ENCODE measurements at regions of chr1 and their contacts with region 1.

Region 1: DNA sequence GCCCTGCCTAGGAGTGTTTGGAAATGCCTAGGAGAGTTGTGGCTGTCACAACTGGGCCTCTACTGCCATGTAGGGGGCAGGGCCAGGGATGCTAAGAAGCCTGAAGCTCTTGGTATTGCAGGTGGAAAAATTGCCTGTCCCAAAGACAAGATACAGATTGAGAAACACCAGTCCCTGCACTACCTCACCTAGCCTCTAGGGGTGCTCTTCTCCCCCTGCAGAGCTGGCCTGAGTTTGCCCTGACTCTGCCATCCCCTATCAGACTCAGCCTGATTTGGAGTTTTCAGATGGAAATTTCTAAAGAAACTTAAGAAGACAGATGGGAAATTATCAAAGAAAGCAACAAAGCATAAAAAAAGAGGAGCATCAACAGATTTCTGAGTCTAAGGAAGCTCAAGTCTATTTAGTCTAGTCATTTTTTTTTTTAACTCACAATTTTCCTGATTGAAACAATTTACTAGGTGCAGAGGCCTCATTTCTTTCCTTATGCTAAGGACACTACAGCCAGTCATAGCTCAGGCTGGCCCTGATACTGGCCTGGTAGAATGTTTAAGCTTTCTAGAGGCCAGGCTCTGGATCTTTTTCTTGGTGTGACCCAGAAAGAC is 61.4 kb upstream of the LRRN2 start:
- DNase-seq: peak; percentile 68
- H3K27ac ChIP-seq: no peak overlapping the region
- CTCF ChIP-seq: peak; percentile 87

Region 2: DNA sequence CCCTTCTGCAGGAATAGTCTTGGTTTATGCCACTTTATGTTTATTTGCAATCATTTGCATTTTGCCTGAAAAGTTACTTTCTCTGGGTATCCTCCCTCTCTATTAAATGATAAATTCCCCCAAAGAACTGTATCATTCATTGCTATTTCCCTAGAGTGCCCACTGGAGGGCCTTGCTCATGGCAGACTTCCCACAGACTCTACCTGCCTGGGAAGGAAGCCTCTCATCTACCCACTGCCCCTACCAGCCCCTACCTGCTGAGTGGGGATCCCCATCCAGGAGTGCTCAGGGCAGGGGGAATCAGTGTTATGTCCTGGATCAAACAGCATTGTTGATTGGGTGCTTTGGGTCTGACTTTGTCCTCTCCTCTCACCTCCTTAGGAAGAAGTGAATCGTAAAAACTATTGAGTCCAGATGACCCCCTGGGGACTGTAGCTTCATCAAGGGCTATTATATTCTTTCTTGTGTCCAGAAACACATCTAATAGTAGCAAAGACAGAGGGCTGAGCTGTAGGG is 54.6 kb before region 1 on chr1:
- CTCF ChIA-PET with region 1: interaction called, 10 read pairs
- POLR2A ChIA-PET with region 1: no interaction called
- DNase-seq: no peak
- H3K27ac ChIP-seq: no peak overlapping the region
- CTCF ChIP-seq: no peak

Region 3: GRCh38 chr1:204725136-204725535 is 21.8 kb before region 1 on chr1:
- CTCF ChIA-PET with region 1: interaction called, 15 read pairs
- POLR2A ChIA-PET with region 1: no interaction called
- DNase-seq: no peak
- H3K27ac ChIP-seq: no peak overlapping the region
- CTCF ChIP-seq: no peak

Region 4: GRCh38 chr1:204730826-204731459 is 16.0 kb before region 1 on chr1:
- CTCF ChIA-PET with region 1: interaction called, 21 read pairs
- POLR2A ChIA-PET with region 1: no interaction called
- DNase-seq: peak; percentile 79
- H3K27ac ChIP-seq: no peak overlapping the region
- CTCF ChIP-seq: no peak

Region 5: GRCh38 chr1:204758606-204759005 is 11.7 kb after region 1 on chr1:
- CTCF ChIA-PET with region 1: interaction called, 20 read pairs
- POLR2A ChIA-PET with region 1: no interaction called
- DNase-seq: no peak
- H3K27ac ChIP-seq: no peak overlapping the region
- CTCF ChIP-seq: no peak

Region 6: DNA sequence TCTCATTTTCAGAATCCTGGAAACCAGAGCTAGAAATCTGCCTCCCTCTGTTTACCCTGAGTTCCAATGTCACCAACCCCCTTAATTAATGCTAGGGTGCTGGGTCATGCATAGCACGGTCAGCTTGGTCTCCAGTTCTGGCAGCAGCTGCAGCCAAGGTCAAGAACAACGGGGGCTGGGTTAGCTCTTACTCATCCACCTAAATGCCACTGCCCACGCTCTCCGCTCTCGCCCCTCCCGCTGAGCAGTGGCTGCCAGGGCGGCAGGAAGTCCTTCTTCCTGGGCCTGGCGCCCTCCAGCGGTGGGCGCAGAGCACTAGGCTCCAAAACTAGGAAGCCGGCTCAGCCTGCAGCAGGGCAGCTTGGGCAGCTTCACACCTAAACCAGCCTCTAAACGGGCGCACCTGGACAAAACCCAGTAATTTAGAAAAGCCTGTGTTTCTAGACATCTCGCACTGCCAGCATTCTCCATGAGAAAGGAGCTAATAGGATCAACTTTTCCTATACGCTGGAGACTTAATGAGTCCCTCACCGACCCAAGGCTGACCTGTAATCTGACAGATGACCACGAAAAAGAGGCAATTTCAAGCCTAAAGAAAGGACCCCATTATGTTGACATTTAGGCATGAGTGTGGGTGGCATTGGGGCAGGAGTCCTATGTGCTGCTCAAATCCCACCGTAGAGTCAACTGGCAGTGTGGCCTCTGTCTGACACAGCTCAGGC is 16.9 kb after region 1 on chr1:
- CTCF ChIA-PET with region 1: interaction called, 20 read pairs
- POLR2A ChIA-PET with region 1: no interaction called
- DNase-seq: peak; percentile 92
- H3K27ac ChIP-seq: no peak overlapping the region
- CTCF ChIP-seq: peak; percentile 63

Measured in RWPE1 (cell line).